ENCODE measurements at regions of chr17 and their contacts with region 1.

Region 1: DNA sequence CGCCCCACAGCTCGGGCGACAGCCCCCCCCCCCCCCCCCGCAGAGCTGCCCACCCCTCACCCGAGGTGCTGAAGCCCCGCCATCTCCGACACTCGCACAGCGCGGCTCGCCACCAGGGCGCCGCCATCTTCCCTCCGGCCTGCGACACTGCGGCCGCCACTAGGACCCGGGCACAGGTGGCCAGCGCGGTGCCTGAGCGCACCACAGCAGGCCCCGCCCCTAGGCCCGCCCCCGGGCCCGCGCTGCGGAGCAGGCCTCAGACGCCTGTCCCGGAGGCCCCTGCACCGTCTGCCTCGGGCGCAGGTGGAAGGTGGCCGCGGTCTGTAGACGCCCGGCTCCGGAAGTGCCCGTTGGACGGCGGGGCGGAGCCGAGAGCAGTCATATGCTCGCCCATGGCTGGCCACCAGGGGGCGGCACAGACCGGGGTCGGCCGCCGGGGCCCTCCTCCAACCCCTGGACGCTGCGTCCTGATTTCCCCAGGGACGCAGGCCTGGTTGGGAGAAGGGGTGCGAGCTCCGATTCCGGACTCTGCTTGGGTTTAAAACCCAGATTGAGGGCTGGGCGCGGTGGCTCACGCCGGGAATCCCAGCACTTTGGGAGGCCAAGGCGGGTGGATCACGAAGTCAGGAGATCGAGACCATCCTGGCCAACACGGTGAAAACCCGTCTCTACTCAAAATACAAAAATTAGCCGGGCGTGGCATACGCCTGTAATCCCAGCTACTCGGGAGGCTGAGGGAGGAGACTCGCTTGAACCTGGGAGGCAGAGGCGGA is at the start of gene MRPL38:
- DNase-seq: peak; percentile 80
- ATAC-seq: peak; percentile 99
- H3K4me3 ChIP-seq: peak within 1 kb of the TSS; percentile 95
- H3K27ac ChIP-seq: peak within 1 kb of the TSS; percentile 71
- H3K4me1 ChIP-seq: no peaks in the 10 kb centered on the region; the same call in 1 of the 2 replicates
- H3K27me3 ChIP-seq: no peaks in the 10 kb centered on the region
- CTCF ChIP-seq: peak; percentile 87 to 98 (median 90); a peak in 5 of 6 replicates
- EP300 ChIP-seq: no peak; a peak in 1 of 4 replicates
- POLR2A ChIP-seq: peak; percentile 91
- RAD21 ChIP-seq: peak; percentile 85
- polyA plus RNA-seq, gene MRPL38: 6.6 to 20.1 TPM

Region 2: GRCh38 chr17:75808905-75809715 is 95.8 kb before region 1 on chr17:
- CTCF ChIA-PET with region 1: no interaction called
- POLR2A ChIA-PET with region 1: no interaction called
- RAD21 ChIA-PET with region 1: no interaction called
- SMC1A ChIA-PET with region 1: no interaction called
- in situ Hi-C with region 1: no loop called
- intact Hi-C with region 1: no loop called
- DNase-seq: peak; percentile 57
- ATAC-seq: peak; percentile 90
- H3K4me3 ChIP-seq: no peak overlapping the region
- H3K27ac ChIP-seq: 0 out of 2 replicates have a peak overlapping the region, but pooled peaks have one; percentile 6
- H3K4me1 ChIP-seq: peaks cover 9% of the 10 kb centered on the region
- H3K27me3 ChIP-seq: no peaks in the 10 kb centered on the region
- CTCF ChIP-seq: no peak
- EP300 ChIP-seq: no peak
- POLR2A ChIP-seq: no peak
- RAD21 ChIP-seq: no peak

Region 3: DNA sequence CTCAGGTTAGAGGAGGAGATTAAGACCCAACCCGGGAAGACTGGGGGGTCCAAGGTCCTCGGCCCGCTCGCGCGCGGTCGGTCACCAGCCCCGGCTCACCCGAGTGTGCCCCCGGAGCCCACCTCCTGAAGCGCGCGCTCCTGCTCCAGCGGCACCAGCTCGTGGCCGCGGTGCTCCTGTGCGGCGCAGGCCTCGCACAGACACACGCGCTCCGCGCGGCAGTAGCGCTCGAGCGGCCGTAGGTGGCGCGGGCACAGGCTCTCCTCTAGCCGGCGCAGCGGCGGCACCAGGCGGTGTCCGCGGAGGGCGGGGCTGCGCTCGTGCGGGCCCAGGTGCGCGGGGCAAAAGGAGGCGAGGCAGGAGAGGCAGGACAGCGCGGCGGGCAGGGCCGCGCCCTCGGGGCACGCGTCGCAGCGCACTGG is 27.2 kb before region 1 on chr17:
- CTCF ChIA-PET with region 1: interaction called, 11 read pairs
- POLR2A ChIA-PET with region 1: interaction called, 4 read pairs
- RAD21 ChIA-PET with region 1: no interaction called
- SMC1A ChIA-PET with region 1: interaction called, 3 read pairs
- in situ Hi-C with region 1: no loop called
- intact Hi-C with region 1: no loop called
- DNase-seq: no peak
- ATAC-seq: peak; percentile 83
- H3K4me3 ChIP-seq: peak overlapping the region; percentile 29; the same call in 1 of the 2 replicates
- H3K27ac ChIP-seq: no peak overlapping the region
- H3K4me1 ChIP-seq: peaks cover 25% of the 10 kb centered on the region
- H3K27me3 ChIP-seq: peaks cover 2% of the 10 kb centered on the region in 2 experiments
- CTCF ChIP-seq: peak; percentile 40 to 50 (median 45); a peak in 5 of 6 replicates
- EP300 ChIP-seq: no peak
- POLR2A ChIP-seq: no peak
- RAD21 ChIP-seq: no peak

Region 4: DNA sequence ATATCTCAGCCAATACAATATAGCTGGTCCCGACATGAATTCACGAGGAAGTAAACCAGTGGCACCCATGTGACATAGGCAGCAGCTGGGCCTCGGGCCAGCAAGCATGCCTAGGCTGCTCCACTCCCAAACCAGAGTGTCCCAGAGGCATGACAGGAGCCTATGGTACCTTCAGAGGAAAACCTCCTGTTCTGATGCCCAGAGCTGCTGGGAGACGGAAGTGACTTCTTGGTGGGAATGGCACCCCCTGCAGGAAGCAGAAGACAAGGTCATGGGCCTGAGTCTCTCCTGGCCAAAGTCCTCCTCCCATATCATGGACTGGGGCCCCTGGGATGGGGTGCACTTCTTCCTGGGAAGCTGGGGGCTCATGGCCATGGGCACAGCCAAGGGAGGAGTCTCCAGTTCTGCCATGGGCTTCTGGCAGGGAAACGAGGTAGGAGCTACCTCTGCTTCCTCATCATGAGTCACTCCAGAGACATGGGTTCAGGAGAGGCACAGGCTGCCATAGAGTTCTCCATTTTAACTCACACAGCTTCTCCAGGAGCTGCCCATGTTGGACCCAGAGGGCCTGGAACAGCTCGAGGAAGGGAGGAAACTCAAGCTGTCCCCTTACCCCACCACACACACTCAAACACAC is 22.5 kb after region 1 on chr17:
- CTCF ChIA-PET with region 1: interaction called, 11 read pairs
- POLR2A ChIA-PET with region 1: interaction called, 5 read pairs
- RAD21 ChIA-PET with region 1: no interaction called
- SMC1A ChIA-PET with region 1: interaction called, 6 read pairs
- in situ Hi-C with region 1: no loop called
- intact Hi-C with region 1: no loop called
- DNase-seq: no peak
- ATAC-seq: peak; percentile 59
- H3K4me3 ChIP-seq: no peak overlapping the region
- H3K27ac ChIP-seq: no peak overlapping the region
- H3K4me1 ChIP-seq: no peaks in the 10 kb centered on the region
- H3K27me3 ChIP-seq: no peaks in the 10 kb centered on the region
- CTCF ChIP-seq: peak; percentile 9 to 40 (median 35); a peak in 3 of 6 replicates
- EP300 ChIP-seq: no peak
- POLR2A ChIP-seq: no peak
- RAD21 ChIP-seq: no peak

Region 5: DNA sequence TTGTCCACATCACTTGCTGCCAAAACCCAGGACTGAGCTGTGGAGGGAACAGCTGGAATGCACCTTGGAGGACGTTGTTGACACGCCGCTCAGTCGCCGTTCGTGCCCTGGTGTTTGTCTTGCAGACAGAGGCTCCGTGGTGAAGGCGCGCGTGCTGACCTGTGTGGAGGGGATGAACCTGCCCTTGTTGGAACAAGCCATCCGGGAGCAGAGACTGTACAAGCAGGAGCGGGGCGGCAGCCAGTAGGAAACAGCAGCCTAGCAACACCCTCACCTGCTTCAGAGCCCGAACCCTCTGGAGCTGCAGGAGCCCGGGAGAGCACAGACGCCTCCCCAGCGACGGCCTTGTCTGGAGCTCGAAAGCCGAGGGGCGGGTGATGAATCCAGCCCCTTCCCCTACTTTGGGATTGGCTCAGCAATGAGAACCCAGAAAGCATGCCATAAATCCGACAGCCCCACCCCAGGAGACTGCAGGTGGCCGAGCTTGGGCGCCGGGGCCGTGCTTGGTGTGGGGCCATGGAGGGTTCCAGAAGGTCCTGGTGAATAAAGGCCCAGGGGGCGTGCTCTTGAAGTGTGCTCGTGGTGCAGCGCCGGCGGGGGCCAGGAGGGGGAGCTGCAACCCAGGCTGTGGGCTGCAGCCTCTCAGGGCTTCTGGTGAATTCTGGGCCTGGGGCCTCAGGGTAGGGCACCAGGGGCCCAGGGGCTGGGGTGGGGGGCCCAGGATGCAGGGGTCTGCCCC is 95.2 kb after region 1 on chr17:
- CTCF ChIA-PET with region 1: interaction called, 128 read pairs
- POLR2A ChIA-PET with region 1: interaction called, 8 read pairs
- RAD21 ChIA-PET with region 1: interaction called, 35 read pairs
- SMC1A ChIA-PET with region 1: interaction called, 61 read pairs
- in situ Hi-C with region 1: loop called (anchors 5 kb)
- intact Hi-C with region 1: loop called (anchors 1 kb)
- DNase-seq: no peak
- ATAC-seq: peak; percentile 74
- H3K4me3 ChIP-seq: no peak overlapping the region
- H3K27ac ChIP-seq: no peak overlapping the region
- H3K4me1 ChIP-seq: peaks cover 16% of the 10 kb centered on the region
- H3K27me3 ChIP-seq: no peaks in the 10 kb centered on the region
- CTCF ChIP-seq: peak; percentile 67 to 87 (median 72)
- EP300 ChIP-seq: no peak
- POLR2A ChIP-seq: no peak
- RAD21 ChIP-seq: peak; percentile 54

Region 6: DNA sequence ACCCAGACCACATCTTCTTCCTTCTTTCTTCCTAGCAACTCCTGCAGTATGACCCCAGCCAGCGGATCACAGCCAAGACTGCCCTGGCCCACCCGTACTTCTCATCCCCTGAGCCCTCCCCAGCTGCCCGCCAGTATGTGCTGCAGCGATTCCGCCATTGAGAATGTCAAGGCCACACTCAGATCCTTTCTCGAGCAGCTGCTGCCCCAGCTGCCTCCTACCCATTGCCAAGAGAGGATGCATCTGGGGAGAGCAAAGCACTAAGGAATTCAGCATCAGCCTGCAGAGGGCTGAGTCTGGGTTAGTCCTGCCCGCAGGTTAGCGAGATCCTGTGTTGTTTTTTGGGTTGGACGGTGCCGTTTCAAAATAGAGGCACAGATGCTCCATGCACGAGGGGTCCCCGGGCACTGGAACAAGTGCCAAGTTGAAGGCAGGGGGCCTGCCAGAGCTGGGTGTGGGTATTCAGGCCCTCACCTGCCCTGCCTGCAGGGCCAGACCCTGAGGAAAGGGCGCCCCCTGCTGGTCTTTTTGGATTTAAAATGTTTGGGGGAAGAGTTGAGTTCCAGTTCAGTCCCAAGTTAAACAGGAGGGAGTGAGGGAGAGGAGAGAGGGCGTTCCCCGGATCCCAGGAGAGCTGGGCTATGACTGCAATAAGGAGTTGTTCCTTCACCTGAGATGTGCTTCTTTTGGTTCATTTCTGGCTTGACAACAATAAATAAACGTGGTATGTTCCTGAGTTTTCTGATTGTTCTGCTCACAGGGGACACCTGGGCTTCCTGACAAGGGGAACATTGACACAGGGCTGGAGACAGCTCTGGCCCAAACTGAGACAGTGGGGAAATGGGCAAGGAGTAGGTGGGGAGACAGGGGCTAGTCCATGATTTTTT is 100.6 kb after region 1 on chr17:
- CTCF ChIA-PET with region 1: interaction called, 128 read pairs
- POLR2A ChIA-PET with region 1: interaction called, 8 read pairs
- RAD21 ChIA-PET with region 1: interaction called, 35 read pairs
- SMC1A ChIA-PET with region 1: interaction called, 61 read pairs
- in situ Hi-C with region 1: loop called (anchors 5 kb)
- intact Hi-C with region 1: loop called (anchors 1 kb)
- DNase-seq: no peak
- ATAC-seq: peak; percentile 95
- H3K4me3 ChIP-seq: no peak overlapping the region
- H3K27ac ChIP-seq: no peak overlapping the region
- H3K4me1 ChIP-seq: no peaks in the 10 kb centered on the region
- H3K27me3 ChIP-seq: no peaks in the 10 kb centered on the region
- CTCF ChIP-seq: peak; percentile 63 to 85 (median 65)
- EP300 ChIP-seq: no peak
- POLR2A ChIP-seq: no peak
- RAD21 ChIP-seq: peak; percentile 97

Measured in GM12878 (cell line).